ENCODE measurements at regions of chr5 and their contacts with region 1.

Region 1: DNA sequence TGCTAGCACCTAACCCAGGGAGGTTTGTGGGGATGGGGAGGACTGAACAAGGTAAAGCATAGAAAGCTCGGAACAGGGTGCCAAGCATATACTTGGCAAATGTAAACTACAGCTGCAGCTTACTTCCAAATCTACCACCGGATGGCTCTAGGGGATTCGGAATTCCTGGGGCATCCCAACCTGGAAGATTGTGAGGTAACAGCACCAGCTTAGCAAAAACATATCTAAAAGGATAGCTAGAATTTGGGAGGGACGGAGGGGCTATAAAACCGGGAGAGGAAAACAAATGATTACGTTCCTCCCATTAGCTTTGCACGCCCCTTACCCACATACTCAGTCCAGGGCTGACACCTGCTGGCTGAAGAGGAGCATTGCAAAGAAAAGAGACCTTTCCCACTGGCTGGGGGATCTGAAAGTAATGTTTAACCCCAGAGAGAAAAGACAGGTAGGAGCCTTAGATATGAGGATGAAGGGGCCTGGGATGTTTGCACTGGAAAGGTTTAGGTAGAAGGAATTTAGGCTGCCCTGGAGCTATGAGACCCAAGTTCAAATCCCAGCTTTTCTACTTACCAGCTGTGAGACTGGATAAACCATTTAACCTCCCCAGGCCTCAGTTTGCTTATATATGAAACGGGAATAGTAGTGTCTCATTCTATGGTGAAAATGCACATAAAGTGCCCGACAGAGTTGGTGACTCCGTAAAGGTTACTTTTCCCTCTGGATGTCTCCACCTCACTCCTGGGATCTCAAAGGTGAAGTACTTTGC is 73.6 kb downstream of the FAM114A2 start:
- DNase-seq: peak in 3 of 5 donors; percentile 32 to 50 (median 44)
- H3K4me3 ChIP-seq: no peak overlapping the region
- H3K27ac ChIP-seq: no peak overlapping the region
- H3K4me1 ChIP-seq: peaks cover 2% of the 10 kb centered on the region
- H3K27me3 ChIP-seq: no peaks in the 10 kb centered on the region
- CTCF ChIP-seq: peak in 2 of 3 donors; percentile 41 to 73
- EP300 ChIP-seq: no peak
- POLR2A ChIP-seq: no peak

Region 2: DNA sequence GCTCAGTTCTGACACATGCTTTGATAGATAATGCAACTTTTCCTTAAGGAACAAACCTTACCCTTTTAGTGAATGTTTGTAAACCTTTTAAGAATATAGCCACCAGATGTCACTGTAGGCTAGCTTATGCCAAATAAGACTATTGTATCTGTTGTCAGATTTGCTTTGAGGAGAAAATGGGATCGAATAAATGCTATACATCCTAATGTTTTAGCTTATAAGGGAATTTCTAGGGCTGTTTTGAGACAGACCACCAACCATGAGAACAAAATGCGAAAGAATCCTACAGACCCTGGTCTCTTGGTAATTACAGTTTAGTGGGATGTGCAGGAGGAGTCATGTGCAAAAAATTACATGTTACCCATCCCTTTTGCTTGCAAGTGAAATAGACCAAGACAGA is 1432.3 kb before region 1 on chr5:
- intact Hi-C with region 1: loop called (anchors 10 kb)
- DNase-seq: no peak
- H3K4me3 ChIP-seq: no peak overlapping the region
- H3K27ac ChIP-seq: no peak overlapping the region
- H3K4me1 ChIP-seq: no peaks in the 10 kb centered on the region
- H3K27me3 ChIP-seq: no peaks in the 10 kb centered on the region
- CTCF ChIP-seq: peak in 1 of 3 donors; percentile 24
- EP300 ChIP-seq: no peak
- POLR2A ChIP-seq: no peak

Region 3: GRCh38 chr5:152688561-152689249 is 1276.4 kb before region 1 on chr5:
- intact Hi-C with region 1: no loop called
- DNase-seq: no peak
- H3K4me3 ChIP-seq: no peak overlapping the region
- H3K27ac ChIP-seq: no peak overlapping the region
- H3K4me1 ChIP-seq: no peaks in the 10 kb centered on the region
- H3K27me3 ChIP-seq: no peaks in the 10 kb centered on the region
- CTCF ChIP-seq: no peak
- EP300 ChIP-seq: no peak
- POLR2A ChIP-seq: no peak

Region 4: DNA sequence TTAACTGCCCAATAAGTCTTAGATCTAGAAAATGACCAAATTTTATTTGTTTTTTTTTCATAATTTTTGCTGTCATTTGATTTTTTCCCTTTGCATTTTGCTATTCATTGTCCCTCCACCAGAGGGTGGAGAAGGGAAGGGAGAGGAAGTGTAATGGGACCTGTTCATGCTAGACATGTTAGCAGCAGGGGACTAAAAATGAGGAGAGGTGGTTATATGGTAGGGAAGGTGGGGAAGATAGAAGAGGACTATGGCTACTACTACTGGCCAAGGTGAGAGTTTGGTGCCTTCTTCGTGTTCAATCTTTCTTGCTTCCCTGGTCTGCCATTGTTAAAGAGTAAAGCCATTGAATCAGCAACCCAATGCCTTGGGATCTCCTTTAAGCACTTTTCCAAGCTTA is 468.2 kb before region 1 on chr5:
- intact Hi-C with region 1: loop called in 1 of 4 experiments (anchors 10 kb)
- DNase-seq: no peak
- H3K4me3 ChIP-seq: no peak overlapping the region
- H3K27ac ChIP-seq: no peak overlapping the region
- H3K4me1 ChIP-seq: no peaks in the 10 kb centered on the region
- H3K27me3 ChIP-seq: no peaks in the 10 kb centered on the region
- CTCF ChIP-seq: peak in 1 of 3 donors; percentile 43
- EP300 ChIP-seq: no peak
- POLR2A ChIP-seq: no peak

Measured in ovary (tissue), 10 donors.